ENCODE measurements at regions of chr13 and their contacts with region 1.

Region 1: GRCh38 chr13:31161828-31162590 is at the start of gene HSPH1:
- DNase-seq: peak; percentile 98
- H3K4me3 ChIP-seq: peak within 1 kb of the TSS; percentile 88 to 99 (median 97)
- H3K27ac ChIP-seq: peak within 1 kb of the TSS; percentile 95
- H3K4me1 ChIP-seq: peaks cover 24% of the 10 kb centered on the region
- H3K27me3 ChIP-seq: no peaks in the 10 kb centered on the region
- CTCF ChIP-seq: peak in 1 of 2 donors; percentile 31
- POLR2A ChIP-seq: peak; percentile 81
- total RNA-seq, gene HSPH1: 98.1 and 124 TPM in 2 replicates

Region 2: DNA sequence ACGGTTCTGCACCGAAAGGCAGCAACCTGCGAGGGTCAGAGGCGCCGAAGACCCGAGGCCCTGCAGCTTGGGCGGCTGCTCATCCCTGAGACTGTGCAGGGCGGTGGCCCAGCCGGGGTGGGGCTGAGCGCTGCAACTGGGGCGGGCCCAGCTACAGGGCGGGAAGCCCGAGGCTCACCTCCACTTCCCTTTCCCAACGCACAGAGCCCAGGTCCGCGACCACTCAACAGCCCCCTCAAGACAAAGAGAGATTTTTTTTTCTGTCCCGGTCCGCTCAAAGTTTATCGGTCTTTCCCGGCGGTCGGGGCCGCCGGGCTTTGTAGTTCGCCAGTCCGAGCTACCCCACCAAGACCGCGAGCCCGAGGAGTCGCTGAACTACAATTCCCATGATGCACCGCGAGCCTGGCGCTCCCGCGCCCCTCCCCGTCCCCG is 855.2 kb before region 1 on chr13:
- CTCF ChIA-PET with region 1: no interaction called
- POLR2A ChIA-PET with region 1: no interaction called
- dilution Hi-C with region 1: no loop called
- intact Hi-C with region 1: loop called (anchors 10 kb)
- DNase-seq: peak; percentile 90
- H3K4me3 ChIP-seq: peak overlapping the region; percentile 36 to 88 (median 77)
- H3K27ac ChIP-seq: peak overlapping the region; percentile 86
- H3K4me1 ChIP-seq: peaks cover 24% of the 10 kb centered on the region
- H3K27me3 ChIP-seq: no peaks in the 10 kb centered on the region
- CTCF ChIP-seq: no peak
- POLR2A ChIP-seq: peak; percentile 50

Region 3: DNA sequence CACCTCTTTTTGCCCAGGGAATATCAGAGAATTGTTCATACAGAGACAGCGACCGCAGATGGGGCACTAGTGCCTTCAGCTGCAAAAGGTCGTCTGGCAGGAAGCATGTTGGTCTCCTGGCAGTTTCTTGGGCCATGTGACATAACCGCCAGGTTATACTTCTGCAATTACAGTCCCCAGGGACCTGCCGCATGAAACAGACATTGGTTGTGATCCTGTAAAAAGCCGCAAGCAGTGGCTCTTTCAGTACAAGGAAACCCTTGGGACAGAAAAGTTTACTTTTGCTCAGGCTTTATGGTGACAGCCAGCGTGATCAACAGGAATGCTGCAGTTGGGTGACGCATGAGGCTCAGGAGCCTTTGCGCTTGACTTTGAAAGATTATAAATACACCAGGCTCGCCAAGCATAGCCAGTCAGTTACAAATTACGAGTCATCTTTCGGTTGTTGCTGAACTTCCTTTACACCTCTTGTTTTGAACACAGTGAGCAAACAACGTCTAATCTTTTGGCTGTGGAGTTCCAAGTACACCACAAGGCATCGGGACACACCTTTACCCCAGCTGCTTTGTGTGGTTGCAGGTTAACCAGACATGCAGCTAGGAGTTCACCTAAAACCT is 790.3 kb before region 1 on chr13:
- CTCF ChIA-PET with region 1: no interaction called
- POLR2A ChIA-PET with region 1: no interaction called
- dilution Hi-C with region 1: no loop called
- intact Hi-C with region 1: no loop called
- DNase-seq: peak; percentile 36
- H3K4me3 ChIP-seq: no peak overlapping the region
- H3K27ac ChIP-seq: no peak overlapping the region
- H3K4me1 ChIP-seq: peaks cover 3% of the 10 kb centered on the region
- H3K27me3 ChIP-seq: peaks cover 0 to 2% of the 10 kb centered on the region in 2 experiments
- CTCF ChIP-seq: no peak
- POLR2A ChIP-seq: no peak

Region 4: GRCh38 chr13:30739761-30740642 is 422.0 kb before region 1 on chr13:
- CTCF ChIA-PET with region 1: no interaction called
- POLR2A ChIA-PET with region 1: no interaction called
- dilution Hi-C with region 1: no loop called
- intact Hi-C with region 1: loop called (anchors 5 kb)
- DNase-seq: peak; percentile 64
- H3K4me3 ChIP-seq: no peak overlapping the region
- H3K27ac ChIP-seq: peak overlapping the region; percentile 66
- H3K4me1 ChIP-seq: peaks cover 50% of the 10 kb centered on the region
- H3K27me3 ChIP-seq: no peaks in the 10 kb centered on the region
- CTCF ChIP-seq: no peak
- POLR2A ChIP-seq: no peak

Region 5: DNA sequence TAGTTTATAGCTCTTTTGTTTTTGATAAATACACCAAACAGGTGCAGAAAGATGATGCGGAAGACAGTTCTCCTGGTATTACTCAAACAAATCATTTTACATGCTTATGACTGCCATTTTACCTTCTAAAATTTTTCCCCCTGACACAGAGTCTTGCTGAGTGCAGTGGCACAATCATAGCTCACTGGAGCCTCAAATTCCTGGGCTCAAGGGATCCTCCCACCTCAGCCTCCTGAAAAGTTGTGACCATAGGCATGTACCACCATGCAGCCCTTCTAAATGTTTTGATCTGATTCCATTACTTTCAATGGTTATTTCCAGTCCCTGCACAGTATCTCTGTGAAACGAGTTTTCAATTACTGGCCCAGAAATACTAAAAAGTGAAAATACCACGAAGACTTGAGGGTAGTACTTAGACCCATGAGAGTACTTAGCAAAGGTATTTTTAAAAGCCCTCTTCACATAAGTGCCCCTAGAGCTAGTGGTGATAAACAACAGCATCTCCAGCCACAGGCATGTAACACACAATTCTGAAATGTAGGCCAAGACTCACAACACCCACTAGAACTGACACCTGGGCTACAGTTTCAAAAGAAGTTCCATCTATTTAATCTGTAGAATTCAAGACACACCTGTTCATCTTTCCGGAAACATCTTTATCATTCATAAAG is 11.6 kb before region 1 on chr13:
- CTCF ChIA-PET with region 1: interaction called, 11 read pairs
- POLR2A ChIA-PET with region 1: no interaction called
- dilution Hi-C with region 1: no loop called
- intact Hi-C with region 1: no loop called
- DNase-seq: no peak
- H3K4me3 ChIP-seq: no peak overlapping the region
- H3K27ac ChIP-seq: no peak overlapping the region
- H3K4me1 ChIP-seq: no peaks in the 10 kb centered on the region
- H3K27me3 ChIP-seq: no peaks in the 10 kb centered on the region
- CTCF ChIP-seq: no peak
- POLR2A ChIP-seq: no peak

Region 6: DNA sequence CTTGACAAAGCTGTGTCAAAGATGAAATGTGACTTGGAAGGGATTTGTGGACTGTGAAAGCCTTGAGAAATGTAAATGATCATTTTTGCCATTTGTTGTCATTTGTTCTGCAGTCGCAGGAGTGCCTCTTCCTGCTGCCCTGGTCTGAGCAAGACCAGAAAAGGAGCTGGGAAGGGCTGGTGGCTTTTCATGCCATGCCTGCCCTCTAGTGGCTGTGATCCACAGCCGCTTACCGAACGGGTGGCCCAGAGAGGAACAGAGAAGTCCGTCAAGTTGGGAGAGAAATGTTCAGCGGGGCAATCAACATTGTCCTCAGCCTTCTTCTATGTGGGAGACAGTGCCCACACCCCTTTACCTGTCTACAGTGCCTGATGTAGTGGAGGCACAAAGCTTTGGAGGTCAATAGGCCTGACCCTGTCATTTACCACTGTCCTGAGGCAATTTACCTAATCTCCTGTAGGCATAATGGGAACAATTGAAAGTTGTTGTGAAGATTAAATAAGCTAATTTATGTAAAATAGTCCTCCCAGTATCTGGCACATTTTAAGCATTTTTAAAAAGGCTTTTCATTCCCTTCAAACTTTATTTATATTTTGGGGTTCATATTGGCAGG is 262.2 kb after region 1 on chr13:
- CTCF ChIA-PET with region 1: interaction called, 4 read pairs
- POLR2A ChIA-PET with region 1: no interaction called
- dilution Hi-C with region 1: no loop called
- intact Hi-C with region 1: loop called (anchors 1 kb)
- DNase-seq: peak; percentile 82
- H3K4me3 ChIP-seq: no peak overlapping the region
- H3K27ac ChIP-seq: no peak overlapping the region
- H3K4me1 ChIP-seq: peaks cover 7% of the 10 kb centered on the region
- H3K27me3 ChIP-seq: peaks cover 6 to 12% of the 10 kb centered on the region in 2 experiments
- CTCF ChIP-seq: peak; percentile 90 to 95
- POLR2A ChIP-seq: no peak